ENCODE measurements at regions of chr2 and their contacts with region 1.

Region 1: DNA sequence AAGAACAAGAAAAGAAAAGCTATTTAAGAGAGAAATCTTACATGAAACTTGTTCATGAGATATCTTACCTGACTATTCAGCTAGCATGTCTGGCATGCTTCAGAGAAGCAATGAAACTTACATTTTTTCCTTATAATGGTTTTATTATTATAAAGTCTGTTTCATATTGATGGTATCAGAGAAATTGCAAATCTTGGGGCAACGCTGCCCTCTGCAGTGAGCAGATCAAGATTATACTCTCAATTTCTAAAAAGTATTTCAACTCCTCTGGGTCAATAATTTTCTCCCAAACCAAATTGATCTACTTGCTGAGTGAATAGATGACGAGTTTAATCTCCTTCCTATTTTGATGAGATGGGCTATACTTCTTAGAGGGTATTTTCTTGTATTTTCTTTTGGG is 235.6 kb downstream of the NUP35 start:
- DNase-seq: peak; percentile 35
- H3K4me3 Mint-ChIP-seq: no peak overlapping the region
- H3K27ac Mint-ChIP-seq: no peak overlapping the region
- H3K4me1 Mint-ChIP-seq: no peaks in the 10 kb centered on the region
- H3K27me3 Mint-ChIP-seq: no peaks in the 10 kb centered on the region
- CTCF ChIP-seq: peak; percentile 33

Region 2: GRCh38 chr2:182763311-182763912 is 596.5 kb before region 1 on chr2:
- CTCF ChIA-PET with region 1: no interaction called
- POLR2A ChIA-PET with region 1: no interaction called
- intact Hi-C with region 1: loop called (anchors 10 kb)
- DNase-seq: peak; percentile 56
- H3K4me3 Mint-ChIP-seq: no peak overlapping the region
- H3K27ac Mint-ChIP-seq: no peak overlapping the region
- H3K4me1 Mint-ChIP-seq: peaks cover 14% of the 10 kb centered on the region
- H3K27me3 Mint-ChIP-seq: no peaks in the 10 kb centered on the region
- CTCF ChIP-seq: peak; percentile 52

Region 3: DNA sequence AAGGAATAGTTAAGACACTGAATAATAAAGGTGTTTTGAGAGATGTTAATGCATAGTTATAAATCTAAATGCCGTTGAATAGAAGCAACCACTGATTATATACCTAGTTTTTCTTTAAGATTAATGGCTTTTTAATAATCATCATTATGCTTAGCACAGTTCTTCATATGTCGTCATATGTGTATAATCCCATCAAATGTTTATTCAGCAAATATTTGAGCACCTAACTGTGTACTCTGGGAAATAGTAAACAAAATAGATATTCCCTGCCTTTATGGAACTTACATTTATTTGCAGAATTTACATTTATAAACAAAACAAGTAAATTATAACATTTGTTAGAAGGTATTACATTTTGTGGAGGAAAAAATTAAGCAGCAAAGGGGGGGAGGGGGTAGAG is 225.9 kb before region 1 on chr2:
- CTCF ChIA-PET with region 1: no interaction called
- POLR2A ChIA-PET with region 1: no interaction called
- intact Hi-C with region 1: loop called (anchors 10 kb)
- DNase-seq: no peak
- H3K4me3 Mint-ChIP-seq: no peak overlapping the region
- H3K27ac Mint-ChIP-seq: no peak overlapping the region
- H3K4me1 Mint-ChIP-seq: no peaks in the 10 kb centered on the region
- H3K27me3 Mint-ChIP-seq: no peaks in the 10 kb centered on the region
- CTCF ChIP-seq: no peak

Region 4: DNA sequence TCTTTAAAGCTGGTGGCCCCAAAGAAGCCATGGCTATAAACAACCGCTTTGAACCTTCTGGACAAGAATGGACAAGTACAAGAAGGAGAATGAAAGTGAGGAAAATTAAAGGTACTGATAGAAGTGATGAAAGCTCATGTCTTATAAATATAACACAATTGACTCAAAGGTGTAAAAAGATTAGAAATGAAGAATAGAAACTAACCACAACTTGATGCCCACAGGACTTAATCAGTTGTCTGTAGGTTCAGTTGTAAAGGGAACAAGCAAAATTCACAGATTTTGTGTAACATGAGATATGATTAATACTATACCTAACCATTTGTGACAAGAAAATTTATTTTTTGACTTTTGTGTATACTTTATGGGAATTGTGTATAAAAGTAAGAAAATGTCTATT is 99.9 kb before region 1 on chr2:
- CTCF ChIA-PET with region 1: interaction called, 11 read pairs
- POLR2A ChIA-PET with region 1: no interaction called
- intact Hi-C with region 1: no loop called
- DNase-seq: no peak
- H3K4me3 Mint-ChIP-seq: no peak overlapping the region
- H3K27ac Mint-ChIP-seq: no peak overlapping the region
- H3K4me1 Mint-ChIP-seq: no peaks in the 10 kb centered on the region
- H3K27me3 Mint-ChIP-seq: no peaks in the 10 kb centered on the region
- CTCF ChIP-seq: no peak

Region 5: DNA sequence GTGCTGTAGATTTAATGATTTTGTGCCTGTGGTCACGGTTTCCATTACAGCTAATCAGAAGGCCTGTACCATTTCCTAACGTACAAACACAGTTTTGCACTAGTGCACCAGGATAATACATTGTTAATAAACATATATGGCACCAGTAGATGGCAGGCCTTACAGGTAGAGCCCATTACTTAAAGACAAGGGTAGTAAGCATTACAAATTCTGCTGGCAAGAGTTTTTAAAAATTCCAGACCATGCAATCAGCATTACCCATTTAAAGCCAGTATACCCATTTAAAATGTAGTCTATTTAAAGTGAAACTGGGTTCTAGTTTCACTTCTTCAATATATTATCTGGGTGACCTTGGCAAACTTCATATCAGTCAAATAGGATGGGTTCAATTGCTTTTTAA is 11.4 kb before region 1 on chr2:
- CTCF ChIA-PET with region 1: interaction called, 18 read pairs
- POLR2A ChIA-PET with region 1: no interaction called
- intact Hi-C with region 1: no loop called
- DNase-seq: no peak
- H3K4me3 Mint-ChIP-seq: no peak overlapping the region
- H3K27ac Mint-ChIP-seq: no peak overlapping the region
- H3K4me1 Mint-ChIP-seq: no peaks in the 10 kb centered on the region
- H3K27me3 Mint-ChIP-seq: no peaks in the 10 kb centered on the region
- CTCF ChIP-seq: no peak